Posterior vena cava (tissue), 2 donors: ENCODE measurements at regions of chr6 and their contacts with region 1.

Region 1: GRCh38 chr6:30483677-30484279 is 5.5 kb upstream of the HLA-E start:
- DNase-seq: no peak

Region 2: DNA sequence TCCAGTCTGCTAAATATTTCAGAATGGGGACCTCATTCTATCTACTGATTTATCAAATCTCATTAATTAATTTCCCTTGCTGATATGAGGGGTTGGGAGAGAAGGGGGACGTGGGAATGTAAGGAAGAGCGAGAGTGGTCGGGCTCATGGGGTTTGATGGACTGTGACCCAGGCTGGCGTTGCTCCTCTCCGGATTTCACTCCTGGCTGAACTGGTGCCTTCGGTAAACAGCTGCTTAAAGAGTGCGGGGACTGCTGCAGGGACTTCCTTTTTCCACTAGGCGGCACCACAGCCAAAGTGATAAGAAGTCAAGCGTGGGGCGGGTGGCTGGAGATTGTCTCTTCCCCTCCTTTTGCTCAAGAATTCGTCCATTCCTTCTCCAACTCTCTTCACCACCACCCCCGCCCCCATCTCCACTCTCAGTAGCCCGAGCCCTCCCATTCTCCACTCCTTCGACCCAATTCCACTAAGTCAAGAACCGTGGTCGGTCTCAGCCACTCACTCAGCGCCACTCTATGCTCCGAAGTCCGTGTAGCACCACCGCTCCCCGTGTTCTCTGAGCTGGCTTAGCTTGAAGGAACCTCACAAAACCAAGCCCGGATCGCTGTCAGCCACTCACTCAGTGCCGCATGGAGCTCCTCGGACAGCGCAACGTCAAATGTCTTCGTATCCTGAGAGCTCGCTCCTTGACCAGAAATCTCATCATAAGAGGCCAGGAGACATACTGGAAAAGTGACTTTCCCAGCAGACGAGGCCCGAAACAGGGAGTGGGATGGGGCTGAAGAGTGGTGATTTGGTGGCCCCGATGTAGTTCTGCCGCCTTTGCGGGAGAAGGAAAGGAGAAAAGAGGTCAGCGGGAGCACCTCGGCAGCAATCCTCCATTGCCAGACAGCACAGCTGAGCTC is 380.6 kb before region 1 on chr6:
- intact Hi-C with region 1: no loop called
- DNase-seq: peak; percentile 94

Region 3: GRCh38 chr6:30304002-30304401 is 179.8 kb before region 1 on chr6:
- intact Hi-C with region 1: no loop called
- DNase-seq: no peak

Region 4: DNA sequence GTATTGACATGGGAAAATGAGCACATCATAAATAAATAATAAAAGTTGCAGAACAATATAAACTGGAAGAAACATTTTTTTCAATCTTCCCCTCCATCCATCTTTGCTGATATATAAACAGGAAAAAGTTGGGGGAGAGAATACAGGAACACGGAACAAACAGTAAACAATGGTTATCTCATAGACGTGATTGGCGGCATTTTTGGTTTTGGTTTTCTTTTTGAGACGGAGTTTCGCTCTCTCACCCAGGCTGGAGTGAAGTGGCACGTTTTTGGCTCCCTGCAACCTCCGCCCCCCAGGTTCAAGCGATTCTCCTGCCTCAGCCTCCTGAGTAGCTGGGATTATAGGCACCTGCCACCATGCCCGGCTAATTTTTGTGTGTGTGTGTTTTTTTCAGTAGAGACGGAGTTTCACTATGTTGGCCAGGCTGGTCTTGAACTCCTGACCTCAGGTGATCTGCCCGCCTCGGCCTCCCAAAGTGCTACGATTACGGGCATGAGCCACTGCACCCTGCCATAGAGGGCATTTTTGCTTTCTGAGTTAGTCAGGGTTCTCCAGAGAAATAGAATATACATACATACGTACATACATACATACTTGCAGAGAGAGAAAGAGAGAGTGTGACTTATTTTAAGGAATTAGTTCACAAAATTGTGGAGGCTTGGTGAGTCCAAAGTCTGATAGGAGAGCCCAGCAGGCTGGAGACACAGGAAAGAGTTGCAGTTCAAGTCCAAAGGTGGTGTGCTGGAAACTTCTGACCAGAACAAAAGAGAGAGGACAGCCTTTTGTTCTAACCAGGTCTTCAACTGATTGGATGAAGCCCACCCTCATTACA is 49.9 kb after region 1 on chr6:
- intact Hi-C with region 1: loop called in 1 of 2 experiments (anchors 1 kb)
- DNase-seq: no peak

Region 5: DNA sequence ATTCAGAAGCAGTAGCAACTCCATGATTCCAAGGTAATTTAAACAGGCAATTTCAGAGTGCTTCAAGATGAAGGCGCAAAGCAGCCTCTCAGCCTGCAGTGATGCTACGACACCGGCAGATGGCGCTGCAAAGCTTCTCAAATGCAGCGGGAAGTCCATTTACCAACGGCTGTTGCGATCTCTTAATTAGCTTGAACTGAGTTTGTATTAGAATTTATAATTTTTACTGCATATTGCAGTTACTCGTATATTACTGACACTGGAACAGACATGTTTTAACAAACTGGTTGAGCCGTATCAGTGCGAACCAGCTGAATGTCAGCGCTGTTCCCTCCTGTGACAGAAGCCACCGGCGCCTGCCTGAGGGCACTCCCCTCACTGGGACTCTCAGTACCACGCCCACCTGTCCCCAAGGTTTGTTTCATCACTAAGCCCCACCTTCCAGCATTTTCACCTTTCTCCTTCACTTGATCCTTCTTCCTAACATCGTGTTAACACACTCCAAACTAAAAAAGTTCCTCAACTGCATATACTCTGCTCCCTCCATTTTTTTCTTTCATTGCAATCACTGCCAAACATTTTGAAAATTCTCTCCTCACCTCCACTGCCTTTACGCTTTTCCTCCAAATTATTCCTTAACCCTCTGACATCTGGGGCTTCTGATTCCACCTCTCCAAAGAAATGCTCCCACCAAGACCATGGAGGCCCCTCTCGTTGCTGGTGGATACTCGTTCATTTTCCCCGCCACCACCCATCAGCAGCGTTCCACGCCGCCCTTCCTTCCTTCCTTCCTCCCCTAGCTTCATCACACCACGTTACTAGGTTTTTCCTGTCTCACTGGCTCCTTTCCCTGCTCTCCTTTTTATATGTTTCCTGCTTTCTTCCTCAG is 58.0 kb after region 1 on chr6:
- intact Hi-C with region 1: loop called in 1 of 2 experiments (anchors 5 kb)
- DNase-seq: peak; percentile 86

Region 6: GRCh38 chr6:30599625-30600324 is 116.0 kb after region 1 on chr6:
- intact Hi-C with region 1: loop called in 1 of 2 experiments (anchors 5 kb)
- DNase-seq: peak; percentile 13